AG04449 (cell line): ENCODE measurements at regions of chr7 and their contacts with region 1.

Region 1: GRCh38 chr7:79806161-79806734 is 328.4 kb upstream of the GNAI1 start:
- DNase-seq: no peak
- H3K4me3 ChIP-seq: no peak overlapping the region
- CTCF ChIP-seq: peak; percentile 36

Region 2: GRCh38 chr7:79790656-79791262 is 15.5 kb before region 1 on chr7:
- CTCF ChIA-PET with region 1: interaction called, 14 read pairs
- POLR2A ChIA-PET with region 1: no interaction called
- DNase-seq: no peak
- H3K4me3 ChIP-seq: no peak overlapping the region
- CTCF ChIP-seq: no peak

Region 3: DNA sequence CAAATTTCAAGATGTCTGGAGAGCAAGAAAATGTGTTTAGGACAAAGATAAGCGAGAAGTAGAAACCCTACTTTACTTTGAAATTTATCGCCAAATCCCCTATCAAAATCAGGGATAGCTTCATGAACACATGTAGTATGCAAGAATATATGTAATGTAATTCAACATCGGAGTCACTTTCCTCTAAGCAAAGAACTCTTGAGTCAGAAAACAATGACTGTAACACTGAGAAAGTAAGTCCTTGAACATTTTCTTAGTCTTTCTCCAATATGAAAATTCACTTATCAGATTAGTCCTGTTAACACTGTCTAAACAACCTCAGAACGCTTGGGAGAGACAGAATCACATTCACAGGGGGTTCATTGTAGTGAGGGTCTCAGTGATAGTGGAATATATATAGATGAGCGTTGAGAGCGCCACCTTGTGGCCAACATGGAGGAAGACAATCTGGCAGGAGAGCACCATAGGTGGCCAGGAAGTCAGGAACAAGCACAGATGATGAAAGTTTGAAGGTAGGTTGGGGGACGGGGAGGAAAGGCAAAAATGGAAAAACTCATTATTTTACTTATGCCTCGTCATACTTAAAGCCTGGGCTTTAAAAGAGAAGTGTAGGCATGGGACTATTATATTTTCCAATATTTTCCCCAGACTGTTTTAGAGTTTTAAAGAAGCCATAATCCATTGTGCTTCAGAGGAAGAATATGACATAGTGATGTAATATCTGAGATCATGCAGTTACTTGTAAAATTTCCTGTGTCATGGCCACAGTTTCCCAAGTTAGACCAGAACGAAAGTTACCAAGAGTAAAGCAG is 212.9 kb after region 1 on chr7:
- CTCF ChIA-PET with region 1: interaction called, 13 read pairs
- POLR2A ChIA-PET with region 1: no interaction called
- DNase-seq: no peak
- H3K4me3 ChIP-seq: no peak overlapping the region
- CTCF ChIP-seq: peak; percentile 77

Region 4: GRCh38 chr7:80039251-80039884 is 233.1 kb after region 1 on chr7:
- CTCF ChIA-PET with region 1: interaction called, 11 read pairs
- POLR2A ChIA-PET with region 1: no interaction called
- DNase-seq: no peak
- H3K4me3 ChIP-seq: no peak overlapping the region
- CTCF ChIP-seq: no peak